Astrocyte of the cerebellum (primary cell): ENCODE measurements at regions of chr11 and their contacts with region 1.

Region 1: GRCh38 chr11:64894070-64894796 is 15.8 kb upstream of the EHD1 start:
- DNase-seq: no peak
- H3K4me3 ChIP-seq: no peak overlapping the region
- CTCF ChIP-seq: peak; percentile 86

Region 2: GRCh38 chr11:64846998-64847666 is 47.1 kb before region 1 on chr11:
- in situ Hi-C with region 1: loop called (anchors 5 kb)
- DNase-seq: peak; percentile 76
- H3K4me3 ChIP-seq: no peak overlapping the region
- CTCF ChIP-seq: peak; percentile 90

Region 3: GRCh38 chr11:64934682-64935358 is 40.6 kb after region 1 on chr11:
- in situ Hi-C with region 1: loop called (anchors 5 kb)
- DNase-seq: no peak
- H3K4me3 ChIP-seq: no peak overlapping the region
- CTCF ChIP-seq: no peak